K562 (cell line): ENCODE measurements at regions of chr5 and their contacts with region 1.

Region 1: DNA sequence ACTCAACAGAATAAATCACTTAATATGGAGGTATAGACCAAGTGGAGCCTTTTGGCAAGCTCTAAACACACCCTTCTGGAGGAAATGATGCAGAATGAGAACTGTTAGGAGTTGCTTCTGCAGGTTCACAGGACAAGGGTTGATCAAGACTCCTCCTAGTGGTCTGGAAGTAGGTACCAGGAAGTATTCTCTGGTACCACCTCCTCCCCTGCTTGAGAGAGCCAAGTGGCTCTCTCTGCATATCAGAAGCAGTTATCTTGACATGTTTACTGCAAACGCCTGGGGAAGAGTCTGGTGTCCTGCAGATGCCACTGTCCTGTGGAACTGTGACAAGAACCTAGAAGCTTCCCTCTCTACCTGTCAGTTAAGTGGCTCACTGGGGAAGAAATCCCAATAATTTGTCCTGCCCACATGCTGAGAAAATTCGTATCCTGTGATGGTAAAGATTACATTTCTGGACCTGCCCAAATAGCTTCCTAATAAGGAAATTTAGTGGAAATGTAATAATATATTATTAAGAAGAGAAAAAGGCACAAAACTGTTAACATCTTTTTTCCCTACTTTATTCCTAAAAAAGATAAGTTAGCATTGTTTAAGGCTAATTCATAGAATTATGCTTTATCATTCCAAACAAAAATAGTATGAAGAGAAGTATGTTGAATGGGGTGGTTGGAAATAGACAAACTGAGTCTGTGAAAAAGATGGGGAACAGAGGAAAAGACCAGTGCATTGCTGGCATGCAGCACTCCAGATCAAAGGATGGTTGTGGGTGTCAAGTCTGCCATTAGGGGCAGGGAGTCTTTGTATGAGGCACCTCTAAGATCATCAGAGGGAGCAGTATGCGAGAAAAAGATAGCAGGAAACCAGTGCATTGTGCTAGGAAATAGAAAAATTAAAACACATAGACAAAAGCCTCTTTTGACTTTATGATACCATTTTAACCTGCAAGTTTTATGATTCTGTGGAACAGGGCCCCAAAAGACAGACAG is 118.8 kb downstream of the CDC42SE2 start:
- DNase-seq: peak; percentile 58 to 86 (median 72)
- ATAC-seq: peak; percentile 90
- H3K4me3 ChIP-seq: no peak overlapping the region
- H3K27ac ChIP-seq: peak overlapping the region; percentile 26; the same call in 2 of the 3 replicates
- H3K4me1 ChIP-seq: peaks cover 10 to 67% of the 10 kb centered on the region in 2 experiments
- H3K27me3 ChIP-seq: no peaks in the 10 kb centered on the region
- CTCF ChIP-seq: peak; percentile 74 to 90 (median 82)
- EP300 ChIP-seq: peak; percentile 75
- POLR2A ChIP-seq: 0 out of 2 replicates have a peak, but pooled peaks have one; percentile 21
- RAD21 ChIP-seq: peak; percentile 80 to 93

Region 2: DNA sequence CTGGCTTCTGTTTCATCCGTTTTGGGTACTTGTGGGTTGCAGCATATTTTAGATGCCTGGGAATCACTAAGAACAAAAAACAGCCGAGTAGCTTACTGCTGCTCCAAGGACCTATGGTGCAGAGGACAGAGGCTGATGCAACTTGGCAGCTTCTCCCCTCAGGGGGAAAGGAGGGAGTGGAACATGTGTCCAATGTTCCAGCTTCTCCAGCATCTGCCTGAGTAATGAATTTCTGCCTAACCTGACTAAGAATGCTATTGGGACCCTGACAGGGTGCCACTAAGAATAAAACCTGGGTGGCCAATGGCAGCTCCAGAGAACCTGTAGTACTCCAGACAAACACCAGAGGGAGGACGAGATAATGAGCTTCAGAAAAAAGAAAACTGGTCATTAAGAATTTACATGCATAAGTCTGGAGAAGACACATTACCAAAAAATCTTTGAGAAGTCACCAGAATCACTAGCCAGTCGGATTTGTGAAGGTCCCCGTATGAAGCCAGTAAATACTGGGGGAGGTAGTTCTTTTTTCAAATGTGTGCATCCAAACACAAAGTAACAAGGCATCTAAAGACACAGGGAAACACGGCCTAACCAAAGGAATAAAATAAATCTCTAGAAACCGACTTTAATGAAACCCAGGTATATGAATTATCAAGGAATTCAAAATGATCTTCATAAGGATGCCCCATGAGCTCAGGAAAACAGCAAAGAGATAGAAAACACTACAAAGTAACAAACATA is 511.2 kb before region 1 on chr5:
- CTCF ChIA-PET with region 1: no interaction called
- POLR2A ChIA-PET with region 1: no interaction called
- in situ Hi-C with region 1: loop called (anchors 25 kb)
- intact Hi-C with region 1: no loop called
- DNase-seq: peak; percentile 46 to 52 (median 48)
- ATAC-seq: peak; percentile 81
- H3K4me3 ChIP-seq: no peak overlapping the region
- H3K27ac ChIP-seq: no peak overlapping the region
- H3K4me1 ChIP-seq: no peaks in the 10 kb centered on the region
- H3K27me3 ChIP-seq: no peaks in the 10 kb centered on the region
- CTCF ChIP-seq: peak; percentile 50 to 71 (median 66)
- EP300 ChIP-seq: no peak
- POLR2A ChIP-seq: no peak
- RAD21 ChIP-seq: peak; percentile 53 to 76

Region 3: GRCh38 chr5:130893006-130893405 is 489.7 kb before region 1 on chr5:
- CTCF ChIA-PET with region 1: no interaction called
- POLR2A ChIA-PET with region 1: no interaction called
- in situ Hi-C with region 1: loop called (anchors 25 kb)
- intact Hi-C with region 1: loop called (anchors 10 kb)
- DNase-seq: no peak
- ATAC-seq: no peak
- H3K4me3 ChIP-seq: no peak overlapping the region
- H3K27ac ChIP-seq: no peak overlapping the region
- H3K4me1 ChIP-seq: no peaks in the 10 kb centered on the region; a peak in 1 of 5 replicates
- H3K27me3 ChIP-seq: no peaks in the 10 kb centered on the region; a peak in 2 of 5 replicates
- CTCF ChIP-seq: no peak
- EP300 ChIP-seq: no peak
- POLR2A ChIP-seq: no peak
- RAD21 ChIP-seq: no peak

Region 4: DNA sequence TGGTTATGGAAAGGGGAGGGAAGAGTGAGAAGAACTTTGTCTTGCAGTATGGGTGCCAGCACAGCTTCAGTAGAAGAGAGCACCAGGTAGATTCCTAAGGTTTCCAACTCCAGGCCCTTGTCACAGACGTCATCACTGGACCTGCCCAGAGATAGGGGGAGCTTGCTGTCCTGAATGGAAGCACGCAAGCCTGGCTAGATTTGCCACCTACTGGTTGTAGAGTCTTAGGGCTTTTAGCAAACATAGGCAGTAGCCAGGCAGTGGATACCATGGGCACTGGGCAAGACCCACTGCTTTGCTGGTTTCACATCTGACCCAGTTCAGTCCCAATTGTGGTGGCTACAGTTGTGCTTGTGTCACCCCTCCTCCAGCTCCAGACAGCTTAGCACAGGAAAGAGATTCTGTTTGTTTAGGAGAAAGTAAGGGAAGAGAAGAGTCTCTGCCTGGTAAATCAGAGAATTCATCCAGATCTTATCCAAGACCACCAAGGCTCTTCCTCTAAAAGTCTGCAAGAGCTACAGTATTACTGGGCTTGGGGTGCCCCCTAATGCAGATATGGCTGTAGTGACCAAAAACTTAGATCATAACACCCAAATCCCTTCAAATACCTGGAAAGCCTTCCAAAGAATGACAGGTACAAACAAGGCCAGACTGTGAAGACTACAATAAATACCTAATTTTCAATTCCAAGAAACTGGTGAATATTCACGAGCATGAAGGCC is 376.6 kb before region 1 on chr5:
- CTCF ChIA-PET with region 1: no interaction called
- POLR2A ChIA-PET with region 1: no interaction called
- in situ Hi-C with region 1: no loop called
- intact Hi-C with region 1: loop called (anchors 2 kb)
- DNase-seq: no peak
- ATAC-seq: peak; percentile 37; the same call in 1 of the 3 replicates
- H3K4me3 ChIP-seq: no peak overlapping the region
- H3K27ac ChIP-seq: no peak overlapping the region
- H3K4me1 ChIP-seq: 0 out of 5 replicates have a peak, but pooled peaks cover 0 to 3% of the 10 kb centered on the region in 2 experiments
- H3K27me3 ChIP-seq: peaks cover 2 to 6% of the 10 kb centered on the region in 2 experiments; a peak in 2 of 5 replicates
- CTCF ChIP-seq: peak in 2 of 3 experiments; percentile 12 to 24; a peak in 1 of 6 replicates
- EP300 ChIP-seq: no peak
- POLR2A ChIP-seq: no peak
- RAD21 ChIP-seq: peak in 1 of 2 experiments; percentile 35; a peak in 2 of 4 replicates

Region 5: DNA sequence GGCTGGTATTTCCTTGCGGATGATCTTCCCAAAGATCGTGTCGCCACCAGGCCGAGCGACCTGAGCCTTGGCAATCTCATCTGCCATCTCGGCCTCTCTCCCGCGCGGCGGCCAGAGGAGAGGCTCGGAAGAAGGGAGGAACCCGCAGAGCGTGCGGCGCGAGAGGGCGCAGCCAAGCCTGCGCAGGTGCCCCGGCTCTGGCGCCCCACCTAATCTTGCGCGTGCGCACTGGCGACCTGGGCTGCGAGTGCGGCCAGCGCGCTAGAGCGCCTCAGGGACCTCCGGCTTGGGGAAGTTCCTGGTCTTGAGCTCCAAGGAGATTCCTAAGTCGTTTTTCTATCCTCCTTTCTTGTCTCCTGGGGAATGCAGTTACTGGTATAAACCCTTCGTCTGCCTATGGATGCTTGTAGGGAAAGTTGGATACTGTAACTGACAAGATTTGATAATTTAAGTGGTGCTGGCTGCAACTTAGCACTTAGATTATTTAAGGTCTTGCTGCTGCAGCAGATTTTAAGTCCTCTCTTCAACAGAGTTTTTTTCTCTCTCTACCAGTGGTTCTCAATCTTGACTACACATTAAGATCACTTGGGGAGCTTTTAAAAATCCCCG is 217.5 kb before region 1 on chr5 and contains the start of gene HINT1:
- CTCF ChIA-PET with region 1: no interaction called
- POLR2A ChIA-PET with region 1: no interaction called
- in situ Hi-C with region 1: loop called (anchors 5 kb)
- intact Hi-C with region 1: loop called (anchors 1 kb)
- DNase-seq: peak; percentile 94 to 97 (median 96)
- ATAC-seq: peak; percentile 88
- H3K4me3 ChIP-seq: peak within 1 kb of the TSS; percentile 82
- H3K27ac ChIP-seq: peak within 1 kb of the TSS; percentile 97
- H3K4me1 ChIP-seq: peaks cover 21 to 25% of the 10 kb centered on the region in 2 experiments
- H3K27me3 ChIP-seq: no peaks in the 10 kb centered on the region
- CTCF ChIP-seq: peak in 2 of 3 experiments; percentile 40 to 44; a peak in 4 of 6 replicates
- EP300 ChIP-seq: no peak
- POLR2A ChIP-seq: peak; percentile 90
- RAD21 ChIP-seq: peak in 1 of 2 experiments; percentile 34; a peak in 2 of 4 replicates
- polyA plus RNA-seq, gene HINT1: 1,005 to 1,027 TPM

Region 6: GRCh38 chr5:131263648-131264450 is 118.9 kb before region 1 on chr5 and contains the start of gene CDC42SE2:
- CTCF ChIA-PET with region 1: no interaction called
- POLR2A ChIA-PET with region 1: interaction called, 3 read pairs
- in situ Hi-C with region 1: no loop called
- intact Hi-C with region 1: loop called (anchors 2 kb)
- DNase-seq: peak; percentile 92 to 94 (median 94)
- ATAC-seq: peak; percentile 93
- H3K4me3 ChIP-seq: peak within 1 kb of the TSS; percentile 94
- H3K27ac ChIP-seq: peak within 1 kb of the TSS; percentile 92
- H3K4me1 ChIP-seq: peaks cover 0 to 4% of the 10 kb centered on the region in 2 experiments; a peak in 3 of 5 replicates
- H3K27me3 ChIP-seq: no peaks in the 10 kb centered on the region
- CTCF ChIP-seq: no peak
- EP300 ChIP-seq: no peak
- POLR2A ChIP-seq: peak; percentile 87
- RAD21 ChIP-seq: peak in 1 of 2 experiments; percentile 19; a peak in 2 of 4 replicates
- polyA plus RNA-seq, gene CDC42SE2: 25.9 to 27.9 TPM

Region 7: GRCh38 chr5:131514316-131515283 is 131.9 kb after region 1 on chr5:
- CTCF ChIA-PET with region 1: no interaction called
- POLR2A ChIA-PET with region 1: no interaction called
- in situ Hi-C with region 1: no loop called
- intact Hi-C with region 1: no loop called
- DNase-seq: no peak
- ATAC-seq: peak; percentile 70
- H3K4me3 ChIP-seq: no peak overlapping the region
- H3K27ac ChIP-seq: peak overlapping the region; percentile 21; the same call in 1 of the 3 replicates
- H3K4me1 ChIP-seq: peaks cover 0 to 7% of the 10 kb centered on the region in 2 experiments; a peak in 2 of 5 replicates
- H3K27me3 ChIP-seq: no peaks in the 10 kb centered on the region
- CTCF ChIP-seq: peak in 1 of 3 experiments; percentile 24; a peak in 1 of 6 replicates
- EP300 ChIP-seq: no peak
- POLR2A ChIP-seq: no peak
- RAD21 ChIP-seq: peak; percentile 25 to 31; a peak in 1 of 4 replicates